Posterior vena cava (tissue), 2 donors: ENCODE measurements at regions of chr10 and their contacts with region 1.

Region 1: DNA sequence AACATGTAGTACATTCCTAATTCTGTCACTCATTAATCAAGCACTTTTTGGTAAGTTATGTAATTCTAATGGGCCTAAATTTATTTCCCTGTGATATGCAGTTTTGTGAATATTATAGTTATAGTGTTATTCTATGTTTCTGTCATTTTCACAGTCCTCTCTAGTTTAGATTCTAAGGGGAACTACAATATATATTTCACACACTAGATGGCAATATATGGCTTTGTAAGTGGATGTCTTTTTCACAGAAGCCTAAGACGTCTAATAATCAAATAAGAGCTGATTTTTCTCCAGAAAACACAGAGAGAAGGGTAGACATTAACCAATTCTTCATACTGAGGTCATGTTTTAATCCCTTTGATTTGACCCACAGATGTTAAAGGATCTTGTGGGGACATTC is 18.0 kb downstream of the RNLS start:
- DNase-seq: no peak

Region 2: GRCh38 chr10:88499569-88500470 is 65.3 kb before region 1 on chr10:
- intact Hi-C with region 1: loop called in 1 of 2 experiments (anchors 2 kb)
- DNase-seq: no peak

Region 3: GRCh38 chr10:88582806-88583583 is 17.9 kb after region 1 on chr10 and contains the start of gene RNLS:
- intact Hi-C with region 1: no loop called
- DNase-seq: peak; percentile 92
- total RNA-seq, gene RNLS: 6.3 to 11.2 TPM